Right ventricle myocardium inferior (tissue), 1 donor: ENCODE measurements at regions of chr16 and their contacts with region 1.

Region 1: DNA sequence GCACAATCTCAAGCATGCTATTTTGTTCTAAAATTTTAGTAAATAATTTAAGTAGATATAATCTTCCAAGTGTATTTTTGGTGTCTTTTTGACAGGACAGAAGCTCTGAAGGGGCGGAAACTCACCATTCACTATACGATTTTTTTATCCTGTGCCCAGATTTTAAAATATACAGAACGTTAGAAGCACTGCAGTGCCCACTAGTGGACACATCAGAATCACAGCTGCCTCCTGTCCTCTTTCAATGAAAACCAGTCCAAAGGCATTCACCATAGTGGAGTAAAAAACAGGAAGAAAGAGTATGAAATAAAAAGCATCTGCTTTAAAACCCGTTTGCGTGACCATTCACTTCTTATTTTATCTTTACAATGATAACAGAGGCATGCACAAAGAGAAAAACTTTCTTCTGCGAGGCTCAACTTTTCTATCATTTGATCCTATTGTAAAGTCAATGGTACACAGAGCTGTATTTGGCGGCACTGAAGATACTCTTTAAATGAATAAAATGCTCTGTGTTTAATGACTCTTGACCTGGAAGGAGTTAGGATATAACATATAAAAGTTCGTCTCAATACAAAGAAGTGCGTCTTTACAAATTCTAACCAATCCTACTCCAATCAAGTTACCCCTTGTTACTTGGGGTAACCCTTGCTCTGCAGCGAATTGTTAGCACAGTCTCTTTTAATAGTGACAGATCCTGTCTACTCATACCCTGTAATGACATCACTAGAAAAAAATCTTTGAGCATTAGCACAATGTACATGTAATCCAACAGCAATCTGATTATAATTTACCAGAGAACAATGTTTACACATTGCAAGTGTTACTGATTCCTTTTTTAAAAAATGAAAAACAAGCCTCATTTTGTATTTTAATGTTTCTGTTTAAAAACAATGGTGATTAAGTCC is 339.8 kb upstream of the PSMD7 start:
- DNase-seq: no peak
- ATAC-seq: no peak

Region 2: GRCh38 chr16:72124761-72125634 is 1831.8 kb before region 1 on chr16:
- intact Hi-C with region 1: loop called (anchors 10 kb)
- DNase-seq: peak; percentile 72
- ATAC-seq: peak; percentile 83